Endothelial cell of umbilical vein (primary cell): ENCODE measurements at regions of chr17 and their contacts with region 1.

Region 1: DNA sequence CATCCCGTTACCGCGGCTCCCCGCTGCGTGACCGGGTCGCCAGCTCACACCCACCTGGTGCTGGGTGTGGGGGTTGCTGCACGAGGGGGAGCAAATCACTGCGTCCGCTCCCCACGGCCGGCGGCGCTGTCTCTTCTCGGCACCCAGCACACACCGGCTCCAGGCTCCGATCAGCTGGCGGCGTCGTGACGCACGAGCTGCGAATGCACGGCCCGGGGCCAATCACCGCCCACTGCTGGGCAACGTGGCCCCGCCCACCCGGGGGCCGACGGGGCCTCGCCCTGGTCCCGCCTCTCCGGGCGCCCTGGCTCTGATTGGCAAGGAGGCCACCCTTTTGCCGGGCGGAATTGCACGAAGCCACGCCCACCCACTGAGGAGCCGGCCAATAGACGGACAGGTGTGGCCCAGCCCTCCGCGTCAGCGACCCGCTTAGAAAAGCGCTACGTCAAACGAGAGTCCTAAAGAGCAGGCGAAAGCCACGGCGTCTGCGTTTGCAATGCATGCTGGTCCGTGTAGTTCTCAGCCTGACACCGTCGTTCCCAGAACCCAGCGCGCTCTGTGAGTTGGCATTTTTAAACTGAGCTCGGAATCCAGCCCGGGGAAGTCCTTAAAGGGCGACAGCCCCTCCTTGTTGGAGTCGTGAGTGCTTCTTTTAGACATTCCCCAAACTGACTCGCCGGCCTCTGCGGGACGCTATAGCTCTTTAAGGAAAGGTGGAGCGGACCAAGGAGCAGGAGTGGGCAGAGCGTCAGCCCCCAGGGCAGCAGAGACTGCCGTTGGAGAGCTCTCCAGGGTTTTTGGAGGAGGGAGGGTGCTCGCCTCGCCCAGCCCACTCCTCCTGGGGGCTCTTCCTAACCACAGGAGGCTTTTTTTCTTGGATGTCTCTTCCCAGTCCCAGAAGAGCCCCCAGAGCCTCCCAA is 6.2 kb upstream of the TLCD2 start:
- DNase-seq: peak; percentile 100
- H3K4me3 ChIP-seq: peak overlapping the region; percentile 72 to 97 (median 76)
- H3K27ac ChIP-seq: peak overlapping the region; percentile 96
- H3K4me1 ChIP-seq: peaks cover 34% of the 10 kb centered on the region
- H3K27me3 ChIP-seq: no peaks in the 10 kb centered on the region
- CTCF ChIP-seq: no peak
- POLR2A ChIP-seq: peak; percentile 99

Region 2: DNA sequence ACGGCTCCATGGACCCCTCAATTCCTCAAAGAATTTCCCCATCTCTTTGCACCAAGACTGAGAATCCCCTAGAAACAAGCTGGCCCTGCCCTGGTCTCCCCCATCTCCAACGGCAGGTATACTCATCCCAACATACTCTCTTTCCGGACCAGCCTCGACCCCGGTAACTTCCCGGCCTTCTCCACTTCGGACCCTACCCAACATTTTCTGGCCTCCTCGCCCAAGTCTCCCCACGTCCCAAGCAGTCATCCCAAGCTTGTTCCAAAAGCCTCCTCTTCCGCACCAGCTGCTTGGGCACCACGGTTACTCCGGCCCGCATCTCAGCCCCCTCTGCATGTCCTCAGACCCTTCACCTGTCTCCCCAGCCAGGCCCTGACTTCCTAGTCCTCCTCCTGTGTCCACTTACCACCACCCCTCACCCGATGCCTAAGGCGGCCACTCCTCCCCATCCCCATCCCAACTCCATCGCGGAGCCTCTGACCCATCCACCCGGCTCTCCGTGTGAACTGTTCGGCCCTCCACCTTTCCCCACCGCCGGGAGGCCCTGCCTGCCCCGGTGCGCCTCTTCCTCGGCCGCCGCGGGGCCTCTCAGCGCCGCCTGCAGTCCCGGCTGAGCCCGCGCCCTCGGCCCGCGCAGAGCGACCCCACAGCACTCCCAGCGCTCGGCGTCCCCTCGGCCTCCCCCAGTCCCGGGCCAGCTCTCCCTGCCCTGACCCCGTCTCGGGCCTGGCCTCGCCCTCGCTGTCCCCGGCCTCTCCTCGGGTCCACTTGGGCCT is 154.7 kb before region 1 on chr17:
- CTCF ChIA-PET with region 1: interaction called, 3 read pairs
- POLR2A ChIA-PET with region 1: interaction called, 4 read pairs
- dilution Hi-C with region 1: no loop called
- intact Hi-C with region 1: loop called (anchors 10 kb)
- DNase-seq: peak; percentile 24
- H3K4me3 ChIP-seq: peak overlapping the region; percentile 45 to 83 (median 69)
- H3K27ac ChIP-seq: peak overlapping the region; percentile 46
- H3K4me1 ChIP-seq: peaks cover 38% of the 10 kb centered on the region
- H3K27me3 ChIP-seq: no peaks in the 10 kb centered on the region
- CTCF ChIP-seq: peak; percentile 15 to 40
- POLR2A ChIP-seq: no peak

Region 3: DNA sequence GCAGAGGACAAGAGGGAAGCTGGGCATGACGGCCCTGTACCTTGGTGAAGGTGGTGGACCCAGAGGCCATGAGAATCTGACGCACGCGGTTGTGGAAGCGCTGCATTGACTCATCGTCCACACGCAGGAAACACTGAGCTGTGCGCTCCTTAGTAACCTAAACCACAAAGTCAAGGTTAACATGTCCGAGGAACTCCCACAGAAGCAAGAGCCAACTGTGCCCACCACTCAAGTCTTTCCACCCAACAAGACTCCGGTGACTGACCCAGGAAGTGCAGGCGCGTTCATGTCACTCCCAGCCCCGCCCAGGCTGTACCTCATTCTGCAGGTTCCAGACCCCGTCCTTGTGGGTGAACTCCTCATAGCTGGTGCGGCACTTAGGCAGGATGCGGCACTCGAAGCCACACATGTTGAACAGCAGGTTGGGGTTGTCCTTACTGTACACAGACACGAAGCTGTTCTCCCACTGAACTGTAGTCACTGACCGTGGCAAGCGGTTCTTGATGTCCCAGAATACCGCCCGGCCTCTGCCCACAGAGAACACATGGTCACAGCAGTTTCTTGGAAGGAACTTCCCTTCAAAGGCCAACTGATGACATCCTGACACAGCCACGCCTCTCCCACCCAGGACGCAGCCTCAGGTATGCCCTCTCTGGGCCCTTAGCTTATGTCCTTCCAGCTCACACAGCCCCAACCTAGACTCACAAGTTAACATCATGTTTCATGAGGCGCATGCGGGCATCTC is 43.1 kb before region 1 on chr17:
- CTCF ChIA-PET with region 1: interaction called, 18 read pairs
- POLR2A ChIA-PET with region 1: interaction called, 3 read pairs
- dilution Hi-C with region 1: no loop called
- intact Hi-C with region 1: loop called (anchors 2 kb)
- DNase-seq: no peak
- H3K4me3 ChIP-seq: no peak overlapping the region
- H3K27ac ChIP-seq: no peak overlapping the region
- H3K4me1 ChIP-seq: no peaks in the 10 kb centered on the region
- H3K27me3 ChIP-seq: no peaks in the 10 kb centered on the region
- CTCF ChIP-seq: no peak
- POLR2A ChIP-seq: no peak

Region 4: DNA sequence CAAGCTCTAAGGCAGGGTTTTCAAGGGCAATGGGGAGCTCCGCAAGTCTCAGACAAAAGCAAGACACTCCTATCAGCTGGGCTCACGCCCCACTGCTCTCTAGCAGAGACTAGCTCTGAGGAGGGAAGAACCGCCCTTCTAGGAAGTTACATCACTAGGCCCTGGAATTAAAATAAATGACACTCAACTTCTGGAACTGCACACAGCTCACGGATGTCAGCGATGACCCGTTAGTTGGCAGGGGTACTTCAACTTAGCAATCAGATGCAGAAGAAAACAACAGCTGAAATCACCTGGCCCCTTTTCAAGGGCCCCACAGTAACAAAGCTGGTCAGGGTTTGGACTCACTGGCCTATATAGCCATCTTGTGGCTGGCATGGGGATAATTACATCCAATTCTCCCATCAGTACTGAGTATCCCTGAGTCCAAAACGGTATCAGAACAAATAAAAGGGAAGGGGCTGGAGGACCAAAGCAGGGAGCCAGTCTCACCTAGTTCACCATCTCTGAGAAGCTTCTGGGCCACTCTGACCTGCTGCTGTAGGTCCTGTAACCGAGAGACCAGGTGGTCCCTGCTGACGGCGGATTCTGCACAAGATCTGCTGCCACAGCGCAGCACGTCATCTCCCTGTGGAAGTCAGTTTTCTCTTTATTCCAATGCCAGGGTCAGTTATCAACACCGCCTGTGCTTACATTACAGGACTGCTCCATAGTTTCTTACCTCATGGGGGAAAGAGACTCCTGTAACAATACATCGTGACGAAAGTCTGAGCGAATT is 67.7 kb after region 1 on chr17:
- CTCF ChIA-PET with region 1: interaction called, 262 read pairs
- POLR2A ChIA-PET with region 1: interaction called, 16 read pairs
- dilution Hi-C with region 1: no loop called
- intact Hi-C with region 1: loop called (anchors 1 kb)
- DNase-seq: peak; percentile 80
- H3K4me3 ChIP-seq: no peak overlapping the region
- H3K27ac ChIP-seq: peak overlapping the region; percentile 19
- H3K4me1 ChIP-seq: peaks cover 21% of the 10 kb centered on the region
- H3K27me3 ChIP-seq: no peaks in the 10 kb centered on the region
- CTCF ChIP-seq: peak; percentile 49 to 63
- POLR2A ChIP-seq: no peak

Region 5: DNA sequence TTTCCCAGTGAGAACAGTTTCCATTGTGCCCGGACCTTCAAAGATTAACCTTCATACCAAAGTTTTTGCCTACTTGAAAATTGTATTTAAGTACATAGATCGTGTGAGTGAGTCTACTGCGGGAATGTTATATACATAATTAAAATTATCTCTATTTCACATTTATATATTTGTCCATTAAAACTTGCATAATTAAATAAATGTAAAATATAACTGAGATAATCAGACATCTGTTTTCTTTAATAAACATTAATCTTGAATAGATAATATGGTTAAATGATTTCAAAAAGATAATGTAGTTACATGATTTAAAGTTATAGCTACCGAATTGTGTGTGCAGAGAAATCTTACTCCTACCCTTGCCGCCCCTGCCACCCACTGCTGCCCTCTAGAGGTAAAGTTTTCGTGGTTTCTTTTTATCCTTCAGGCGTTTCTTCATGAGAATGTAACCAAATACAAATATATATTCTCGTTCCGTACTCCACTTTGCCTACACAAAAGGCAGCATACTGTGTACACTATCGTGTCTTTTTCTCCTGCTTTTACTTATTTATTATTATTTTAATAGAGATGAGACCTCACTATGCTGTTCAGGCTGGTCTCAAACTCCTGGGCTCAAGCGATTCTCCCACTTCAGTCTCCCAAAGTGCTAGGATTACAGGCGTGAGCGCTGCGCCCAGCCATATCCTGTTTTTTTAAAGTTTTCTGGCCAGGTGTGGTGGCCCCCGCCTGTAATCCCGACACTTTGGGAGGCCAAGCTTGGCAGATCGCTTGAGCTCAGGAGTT is 149.1 kb after region 1 on chr17:
- CTCF ChIA-PET with region 1: interaction called, 53 read pairs
- POLR2A ChIA-PET with region 1: interaction called, 3 read pairs
- dilution Hi-C with region 1: no loop called
- intact Hi-C with region 1: loop called (anchors 5 kb)
- DNase-seq: peak; percentile 37
- H3K4me3 ChIP-seq: no peak overlapping the region
- H3K27ac ChIP-seq: no peak overlapping the region
- H3K4me1 ChIP-seq: peaks cover 5% of the 10 kb centered on the region
- H3K27me3 ChIP-seq: no peaks in the 10 kb centered on the region
- CTCF ChIP-seq: peak; percentile 33 to 46
- POLR2A ChIP-seq: no peak

Region 6: GRCh38 chr17:2336215-2336851 is 620.0 kb after region 1 on chr17 and contains the start of gene TSR1:
- CTCF ChIA-PET with region 1: no interaction called
- POLR2A ChIA-PET with region 1: no interaction called
- dilution Hi-C with region 1: no loop called
- intact Hi-C with region 1: loop called (anchors 10 kb)
- DNase-seq: peak; percentile 92
- H3K4me3 ChIP-seq: peak within 1 kb of the TSS; percentile 56 to 85 (median 72)
- H3K27ac ChIP-seq: peak within 1 kb of the TSS; percentile 26
- H3K4me1 ChIP-seq: peaks cover 16% of the 10 kb centered on the region
- H3K27me3 ChIP-seq: no peaks in the 10 kb centered on the region
- CTCF ChIP-seq: peak in 1 of 2 donors; percentile 30
- POLR2A ChIP-seq: peak; percentile 95
- total RNA-seq, gene TSR1: 35.0 and 39.9 TPM in 2 replicates